CD8-positive, alpha-beta T cell (primary cell): ENCODE measurements at regions of chr4 and their contacts with region 1.

Region 1: GRCh38 chr4:30916337-30917274 is 196.4 kb downstream of the PCDH7 start:
- DNase-seq: no peak
- ATAC-seq: no peak
- H3K4me3 ChIP-seq: no peak overlapping the region
- H3K4me3 Mint-ChIP-seq: no peak overlapping the region
- H3K27ac ChIP-seq: no peak overlapping the region
- H3K27ac Mint-ChIP-seq: no peak overlapping the region
- H3K4me1 ChIP-seq: no peaks in the 10 kb centered on the region
- H3K4me1 Mint-ChIP-seq: no peaks in the 10 kb centered on the region
- H3K27me3 ChIP-seq: no peaks in the 10 kb centered on the region
- H3K27me3 Mint-ChIP-seq: no peaks in the 10 kb centered on the region
- CTCF ChIP-seq: no peak

Region 2: GRCh38 chr4:30879855-30880598 is 36.6 kb before region 1 on chr4:
- CTCF ChIA-PET with region 1: no interaction called
- POLR2A ChIA-PET with region 1: no interaction called
- intact Hi-C with region 1: loop called in 1 of 2 experiments (anchors 2 kb)
- DNase-seq: no peak
- ATAC-seq: no peak
- H3K4me3 ChIP-seq: no peak overlapping the region
- H3K4me3 Mint-ChIP-seq: no peak overlapping the region
- H3K27ac ChIP-seq: no peak overlapping the region
- H3K27ac Mint-ChIP-seq: no peak overlapping the region
- H3K4me1 ChIP-seq: no peaks in the 10 kb centered on the region
- H3K4me1 Mint-ChIP-seq: no peaks in the 10 kb centered on the region
- H3K27me3 ChIP-seq: no peaks in the 10 kb centered on the region
- H3K27me3 Mint-ChIP-seq: no peaks in the 10 kb centered on the region
- CTCF ChIP-seq: no peak

Region 3: GRCh38 chr4:31246856-31247255 is 330.2 kb after region 1 on chr4:
- CTCF ChIA-PET with region 1: no interaction called
- POLR2A ChIA-PET with region 1: no interaction called
- intact Hi-C with region 1: no loop called
- DNase-seq: no peak
- ATAC-seq: no peak
- H3K4me3 ChIP-seq: no peak overlapping the region
- H3K4me3 Mint-ChIP-seq: no peak overlapping the region
- H3K27ac ChIP-seq: no peak overlapping the region
- H3K27ac Mint-ChIP-seq: no peak overlapping the region
- H3K4me1 ChIP-seq: no peaks in the 10 kb centered on the region
- H3K4me1 Mint-ChIP-seq: no peaks in the 10 kb centered on the region
- H3K27me3 ChIP-seq: no peaks in the 10 kb centered on the region
- H3K27me3 Mint-ChIP-seq: no peaks in the 10 kb centered on the region
- CTCF ChIP-seq: no peak